WTC11 (cell line): ENCODE measurements at regions of chr14 and their contacts with region 1.

Region 1: GRCh38 chr14:63388763-63389431 is 70.2 kb upstream of the GPHB5 start:
- DNase-seq: peak; percentile 76
- ATAC-seq: peak; percentile 96
- H3K4me3 Mint-ChIP-seq: no peak overlapping the region
- H3K27ac Mint-ChIP-seq: 0 out of 2 replicates have a peak overlapping the region, but pooled peaks have one; percentile 9
- H3K4me1 Mint-ChIP-seq: no peaks in the 10 kb centered on the region
- H3K27me3 Mint-ChIP-seq: no peaks in the 10 kb centered on the region
- CTCF ChIP-seq: peak; percentile 78

Region 2: GRCh38 chr14:63543000-63543825 is 154.3 kb after region 1 on chr14 and contains the start of gene PPP2R5E:
- CTCF ChIA-PET with region 1: interaction called, 13 read pairs
- POLR2A ChIA-PET with region 1: interaction called, 13 read pairs
- DNase-seq: peak; percentile 98
- ATAC-seq: peak; percentile 95
- H3K4me3 Mint-ChIP-seq: peak within 1 kb of the TSS; percentile 98
- H3K27ac Mint-ChIP-seq: peak within 1 kb of the TSS; percentile 96
- H3K4me1 Mint-ChIP-seq: peaks cover 22% of the 10 kb centered on the region
- H3K27me3 Mint-ChIP-seq: no peaks in the 10 kb centered on the region
- CTCF ChIP-seq: no peak
- total RNA-seq, gene PPP2R5E: 56.9 to 59.0 TPM (median 57.5 TPM) in 3 replicates

Region 3: DNA sequence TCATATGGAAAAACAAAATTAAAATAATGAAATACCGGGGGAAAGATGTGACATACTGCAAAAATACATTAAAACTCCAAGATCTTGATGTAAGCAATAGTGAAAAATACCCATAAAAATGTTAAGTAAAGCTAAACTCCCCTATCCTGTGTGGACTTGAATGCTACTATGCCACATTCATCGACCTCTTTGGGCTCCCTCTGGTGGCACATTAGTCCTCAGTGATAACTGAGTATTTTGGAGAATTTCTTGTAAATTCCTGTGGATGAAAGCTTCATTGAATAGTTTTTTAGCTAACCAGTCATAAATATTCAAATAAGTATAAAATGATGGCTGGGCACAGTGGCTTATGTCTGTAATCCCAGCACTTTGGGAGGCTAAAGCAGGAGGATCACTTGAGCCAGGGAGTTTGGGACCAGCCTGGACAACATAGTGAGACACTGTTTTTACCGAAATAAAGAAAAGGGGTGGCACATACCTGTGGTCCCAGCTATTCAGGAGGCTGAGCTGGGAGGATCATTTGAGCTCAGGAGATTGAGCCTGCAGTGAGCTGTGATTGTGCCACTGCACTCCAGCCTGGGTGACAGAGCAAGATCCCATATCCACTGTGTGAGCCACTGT is 381.4 kb after region 1 on chr14:
- CTCF ChIA-PET with region 1: interaction called, 16 read pairs
- POLR2A ChIA-PET with region 1: no interaction called
- DNase-seq: no peak
- ATAC-seq: peak; percentile 79
- H3K4me3 Mint-ChIP-seq: no peak overlapping the region
- H3K27ac Mint-ChIP-seq: no peak overlapping the region
- H3K4me1 Mint-ChIP-seq: no peaks in the 10 kb centered on the region
- H3K27me3 Mint-ChIP-seq: no peaks in the 10 kb centered on the region
- CTCF ChIP-seq: no peak